PC-9 (cell line): ENCODE measurements at regions of chr2 and their contacts with region 1.

Region 1: GRCh38 chr2:3575534-3576262 is 638 bp downstream of the RPS7 start:
- DNase-seq: no peak
- H3K4me3 ChIP-seq: peak overlapping the region; percentile 88
- H3K27ac ChIP-seq: peak overlapping the region; percentile 91
- H3K4me1 ChIP-seq: peaks cover 37% of the 10 kb centered on the region
- H3K27me3 ChIP-seq: no peaks in the 10 kb centered on the region
- CTCF ChIP-seq: no peak

Region 2: DNA sequence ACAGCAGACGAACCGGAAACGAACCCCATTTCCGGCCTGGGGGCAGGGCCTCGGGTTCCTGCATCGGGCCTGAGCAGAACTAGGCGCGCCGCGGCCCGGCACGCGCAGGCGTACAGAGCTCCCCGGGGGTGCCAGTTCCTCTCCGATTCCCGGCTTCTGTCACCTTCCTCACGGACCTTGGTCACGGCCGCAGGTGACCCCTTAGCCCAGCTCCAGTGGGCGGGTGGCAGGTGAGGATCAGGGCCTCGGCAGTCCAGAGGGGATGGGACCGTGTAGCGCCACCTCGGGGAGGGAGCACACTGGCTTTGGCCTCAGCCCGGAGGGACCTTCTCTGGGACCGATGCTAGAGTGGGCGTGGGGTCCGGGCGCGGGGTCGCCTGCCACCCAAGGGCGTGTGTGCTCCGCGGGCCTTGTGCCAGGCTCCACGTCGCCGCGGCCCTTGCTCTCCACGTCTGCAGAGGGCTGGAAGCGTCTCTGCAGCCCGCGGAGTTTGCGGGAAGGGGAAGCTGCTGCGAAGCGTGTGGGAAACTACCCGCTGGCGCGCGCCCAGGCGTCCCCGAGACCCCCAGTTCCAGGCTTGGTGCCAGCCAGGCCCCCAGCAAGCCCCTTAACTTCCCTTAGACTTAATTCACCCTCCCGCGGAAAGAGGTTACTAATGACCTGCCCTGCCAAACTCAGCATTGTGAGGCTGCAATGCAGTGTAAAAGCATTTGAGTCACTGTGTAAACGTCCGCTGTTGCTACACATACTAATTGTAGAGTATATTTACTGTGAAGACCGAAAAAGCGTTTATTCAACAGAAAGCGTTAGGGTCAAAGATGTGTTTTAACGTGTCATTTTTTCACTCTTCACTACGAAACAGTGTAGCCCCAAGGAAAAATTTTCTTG is 195.8 kb before region 1 on chr2 and contains the start of gene TRAPPC12:
- CTCF ChIA-PET with region 1: no interaction called
- POLR2A ChIA-PET with region 1: no interaction called
- intact Hi-C with region 1: loop called (anchors 1 kb)
- DNase-seq: peak; percentile 88 to 93
- H3K4me3 ChIP-seq: peak within 1 kb of the TSS; percentile 85
- H3K27ac ChIP-seq: peak within 1 kb of the TSS; percentile 80
- H3K4me1 ChIP-seq: peaks cover 30% of the 10 kb centered on the region
- H3K27me3 ChIP-seq: no peaks in the 10 kb centered on the region
- CTCF ChIP-seq: peak; percentile 51; the same call in 1 of the 2 replicates
- total RNA-seq, gene TRAPPC12: 69.3 and 77.6 TPM in 2 replicates

Region 3: GRCh38 chr2:3558205-3559014 is 17.3 kb before region 1 on chr2 and contains the start of gene RNASEH1:
- CTCF ChIA-PET with region 1: no interaction called
- POLR2A ChIA-PET with region 1: no interaction called
- intact Hi-C with region 1: loop called (anchors 1 kb)
- DNase-seq: peak; percentile 97 to 98
- H3K4me3 ChIP-seq: peak within 1 kb of the TSS; percentile 81
- H3K27ac ChIP-seq: peak within 1 kb of the TSS; percentile 89
- H3K4me1 ChIP-seq: peaks cover 21% of the 10 kb centered on the region
- H3K27me3 ChIP-seq: no peaks in the 10 kb centered on the region
- CTCF ChIP-seq: no peak
- total RNA-seq, gene RNASEH1: 28.4 and 31.0 TPM in 2 replicates

Region 4: GRCh38 chr2:3594493-3595281 is 19.0 kb after region 1 on chr2 and contains the start of gene COLEC11:
- CTCF ChIA-PET with region 1: no interaction called
- POLR2A ChIA-PET with region 1: no interaction called
- intact Hi-C with region 1: no loop called
- DNase-seq: no peak
- H3K4me3 ChIP-seq: no peak within 1 kb of the TSS
- H3K27ac ChIP-seq: no peak within 1 kb of the TSS
- H3K4me1 ChIP-seq: no peaks in the 10 kb centered on the region
- H3K27me3 ChIP-seq: no peaks in the 10 kb centered on the region
- CTCF ChIP-seq: no peak
- total RNA-seq, gene COLEC11: 2.4 and 4.6 TPM in 2 replicates

Region 5: DNA sequence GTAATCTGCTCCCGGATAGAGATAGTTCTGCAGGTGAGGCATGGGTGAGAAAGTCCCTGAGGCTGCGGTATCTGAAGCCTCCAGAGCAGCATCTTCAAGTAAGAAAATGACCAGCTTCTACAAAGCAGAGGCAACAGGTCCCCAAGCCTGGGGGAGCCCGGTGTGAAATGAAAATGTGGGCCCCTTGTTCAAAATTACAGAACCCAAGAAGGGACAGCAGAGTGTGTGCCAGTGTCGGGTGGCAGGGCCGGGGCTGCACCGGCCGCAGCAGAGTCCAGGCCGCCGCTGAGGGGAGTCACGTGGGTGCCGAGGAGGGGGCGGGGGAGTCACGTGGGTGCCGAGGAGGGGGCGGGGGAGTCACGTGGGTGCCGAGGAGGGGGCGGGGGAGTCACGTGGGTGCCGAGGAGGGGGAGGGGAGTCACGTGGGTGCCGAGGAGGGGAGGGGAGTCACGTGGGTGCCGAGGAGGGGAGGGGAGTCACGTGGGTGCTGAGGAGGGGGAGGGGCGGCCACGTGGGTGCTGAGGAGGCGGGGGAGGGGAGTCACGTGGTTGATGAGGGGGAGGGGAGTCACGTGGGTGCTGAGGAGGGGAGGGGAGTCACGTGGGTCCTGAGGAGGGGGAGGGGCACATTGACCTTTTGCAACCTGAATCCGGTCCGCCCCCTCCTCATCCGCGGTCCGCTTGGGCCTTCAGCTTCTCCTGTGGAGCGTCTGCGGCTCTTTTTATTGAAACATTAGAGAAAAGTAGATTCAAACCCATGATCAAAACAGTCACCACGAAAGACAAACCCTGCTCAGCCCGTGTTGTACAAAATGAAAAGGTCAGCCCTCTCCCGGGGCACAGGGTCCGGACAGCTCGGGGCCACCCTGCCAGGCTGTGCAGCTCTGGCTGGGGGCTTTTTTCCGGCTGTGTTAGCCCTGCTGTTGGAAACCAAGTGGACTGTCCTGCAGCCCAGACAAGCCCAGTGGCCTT is 29.6 kb after region 1 on chr2:
- CTCF ChIA-PET with region 1: no interaction called
- POLR2A ChIA-PET with region 1: interaction called, 10 read pairs
- intact Hi-C with region 1: no loop called
- DNase-seq: peak; percentile 65 to 73
- H3K4me3 ChIP-seq: peak overlapping the region; percentile 91
- H3K27ac ChIP-seq: peak overlapping the region; percentile 74
- H3K4me1 ChIP-seq: peaks cover 21% of the 10 kb centered on the region
- H3K27me3 ChIP-seq: no peaks in the 10 kb centered on the region
- CTCF ChIP-seq: no peak